Ascending aorta (tissue), 2 donors: ENCODE measurements at regions of chr7 and their contacts with region 1.

Region 1: DNA sequence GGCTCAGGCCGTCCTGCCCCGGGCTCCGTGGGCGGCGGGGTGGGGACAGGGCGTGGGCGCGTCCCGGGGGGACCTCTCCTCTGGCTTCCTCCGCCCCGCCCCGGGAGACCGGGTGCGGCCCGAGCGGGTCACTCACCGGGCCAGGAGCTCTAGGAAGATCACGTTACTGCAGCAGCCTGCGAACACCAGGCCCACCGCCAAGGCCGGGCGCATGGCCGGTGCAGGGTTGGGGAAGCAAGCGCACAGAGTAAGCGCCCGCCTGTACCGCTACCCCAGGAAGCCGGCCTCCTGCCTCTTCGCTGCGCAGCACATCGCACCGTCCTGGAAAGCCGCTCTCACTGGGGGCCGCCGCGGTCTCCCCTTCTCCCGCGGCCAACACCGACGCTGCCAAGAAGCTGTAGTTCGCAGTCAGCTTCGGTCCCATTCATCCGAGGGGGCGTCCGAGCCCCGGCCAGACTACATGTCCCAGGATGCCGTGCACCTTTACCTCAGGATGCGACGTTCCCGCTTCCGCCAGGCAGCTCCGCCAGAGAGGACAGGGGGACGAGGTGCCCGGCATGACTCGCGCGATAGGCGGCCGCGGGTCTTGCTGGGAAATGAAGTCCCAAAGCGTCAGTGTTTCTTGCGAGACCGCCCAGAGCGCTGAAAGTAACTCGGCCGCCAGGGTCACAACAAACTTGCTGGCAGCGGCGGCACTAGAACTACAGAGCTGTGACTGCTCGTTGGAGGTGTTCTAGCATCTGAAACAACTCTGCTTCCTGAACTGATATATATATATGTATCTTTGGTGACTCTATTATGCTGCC is at the start of gene SLC35B4:
- DNase-seq: peak; percentile 91 to 98
- H3K4me3 ChIP-seq: peak within 1 kb of the TSS; percentile 89 to 96
- H3K27ac ChIP-seq: peak within 1 kb of the TSS; percentile 67 to 74
- H3K4me1 ChIP-seq: peaks cover 0 to 6% of the 10 kb centered on the region in 2 donors
- H3K27me3 ChIP-seq: no peaks in the 10 kb centered on the region
- CTCF ChIP-seq: peak in 1 of 3 experiments; percentile 22
- total RNA-seq, gene SLC35B4: 5.3 TPM

Region 2: DNA sequence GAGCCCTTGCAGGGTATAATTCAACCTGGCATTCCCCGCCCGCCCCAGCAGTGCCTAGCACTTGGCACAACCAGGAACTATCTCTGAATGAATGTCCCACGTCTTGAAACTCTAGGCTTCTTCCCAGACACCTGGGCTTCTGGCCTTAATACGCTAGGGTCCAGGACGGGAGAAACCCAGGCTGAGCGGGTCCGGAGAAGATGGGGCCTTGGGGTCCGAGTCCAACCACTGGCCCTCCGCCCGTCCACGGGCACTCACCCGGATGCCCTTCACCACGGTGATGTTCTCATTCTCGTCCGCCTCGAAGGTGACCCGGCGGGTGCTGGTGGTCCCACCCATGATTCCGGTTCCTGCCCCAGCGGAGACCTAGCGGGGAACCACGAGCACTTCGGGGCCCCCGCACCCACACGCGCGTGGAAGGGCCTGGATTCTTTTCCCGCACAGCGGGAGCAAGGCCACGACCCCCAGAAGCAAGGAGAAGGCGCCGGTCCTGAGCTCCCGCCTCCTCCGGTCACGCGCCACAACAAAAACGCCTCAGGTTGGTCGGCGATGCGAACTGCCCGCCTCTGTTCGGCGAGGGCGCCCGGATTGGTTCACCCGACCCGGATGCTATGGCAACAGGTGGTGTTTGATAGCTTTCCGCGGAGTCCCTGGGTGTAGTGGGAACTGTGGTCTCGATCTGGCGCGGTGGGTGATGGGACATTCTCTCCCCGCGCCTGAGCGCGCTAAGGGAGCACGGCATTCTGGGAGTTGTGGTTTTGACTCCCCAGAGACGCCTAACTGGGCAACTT is 1234.9 kb before region 1 on chr7 and contains the start of gene CHCHD3:
- intact Hi-C with region 1: loop called (anchors 10 kb)
- DNase-seq: peak; percentile 97 to 99
- H3K4me3 ChIP-seq: peak within 1 kb of the TSS; percentile 83 to 85
- H3K27ac ChIP-seq: peak within 1 kb of the TSS; percentile 36 to 82
- H3K4me1 ChIP-seq: peaks cover 4 to 9% of the 10 kb centered on the region in 2 donors
- H3K27me3 ChIP-seq: no peaks in the 10 kb centered on the region
- CTCF ChIP-seq: no peak
- total RNA-seq, gene CHCHD3: 26.2 TPM

Region 3: GRCh38 chr7:134126966-134127848 is 189.5 kb before region 1 on chr7 and contains the start of gene LRGUK:
- intact Hi-C with region 1: loop called (anchors 1 kb)
- DNase-seq: peak; percentile 23 to 86
- H3K4me3 ChIP-seq: peak within 1 kb of the TSS; percentile 59 to 72
- H3K27ac ChIP-seq: no peak within 1 kb of the TSS
- H3K4me1 ChIP-seq: peaks cover 0 to 2% of the 10 kb centered on the region in 2 donors
- H3K27me3 ChIP-seq: no peaks in the 10 kb centered on the region
- CTCF ChIP-seq: no peak
- total RNA-seq, gene LRGUK: not detected

Region 4: GRCh38 chr7:134605973-134606923 is 289.5 kb after region 1 on chr7:
- intact Hi-C with region 1: loop called (anchors 10 kb)
- DNase-seq: peak in 1 of 2 donors; percentile 77
- H3K4me3 ChIP-seq: peak overlapping the region in 1 of 2 donors; percentile 24
- H3K27ac ChIP-seq: no peak overlapping the region
- H3K4me1 ChIP-seq: no peaks in the 10 kb centered on the region
- H3K27me3 ChIP-seq: no peaks in the 10 kb centered on the region
- CTCF ChIP-seq: peak; percentile 84 to 92 (median 86)

Region 5: GRCh38 chr7:135977007-135977741 is 1660.4 kb after region 1 on chr7 and contains the start of gene MTPN:
- intact Hi-C with region 1: loop called (anchors 5 kb)
- DNase-seq: peak; percentile 98 to 100
- H3K4me3 ChIP-seq: peak within 1 kb of the TSS; percentile 85
- H3K27ac ChIP-seq: peak within 1 kb of the TSS; percentile 81 to 84
- H3K4me1 ChIP-seq: peaks cover 0 to 23% of the 10 kb centered on the region in 2 donors
- H3K27me3 ChIP-seq: no peaks in the 10 kb centered on the region
- CTCF ChIP-seq: no peak
- total RNA-seq, gene MTPN: 43.5 TPM